Posterior cingulate gyrus (tissue), 11 donors: ENCODE measurements at regions of chr22 and their contacts with region 1.

Region 1: GRCh38 chr22:37199103-37199759 is 11.2 kb upstream of the C1QTNF6 start:
- DNase-seq: peak; percentile 94 to 100 (median 97)

Region 2: GRCh38 chr22:36546092-36546804 is 653.0 kb before region 1 on chr22:
- intact Hi-C with region 1: loop called (anchors 10 kb)
- DNase-seq: peak in 9 of 10 donors; percentile 38 to 91 (median 55)

Region 3: DNA sequence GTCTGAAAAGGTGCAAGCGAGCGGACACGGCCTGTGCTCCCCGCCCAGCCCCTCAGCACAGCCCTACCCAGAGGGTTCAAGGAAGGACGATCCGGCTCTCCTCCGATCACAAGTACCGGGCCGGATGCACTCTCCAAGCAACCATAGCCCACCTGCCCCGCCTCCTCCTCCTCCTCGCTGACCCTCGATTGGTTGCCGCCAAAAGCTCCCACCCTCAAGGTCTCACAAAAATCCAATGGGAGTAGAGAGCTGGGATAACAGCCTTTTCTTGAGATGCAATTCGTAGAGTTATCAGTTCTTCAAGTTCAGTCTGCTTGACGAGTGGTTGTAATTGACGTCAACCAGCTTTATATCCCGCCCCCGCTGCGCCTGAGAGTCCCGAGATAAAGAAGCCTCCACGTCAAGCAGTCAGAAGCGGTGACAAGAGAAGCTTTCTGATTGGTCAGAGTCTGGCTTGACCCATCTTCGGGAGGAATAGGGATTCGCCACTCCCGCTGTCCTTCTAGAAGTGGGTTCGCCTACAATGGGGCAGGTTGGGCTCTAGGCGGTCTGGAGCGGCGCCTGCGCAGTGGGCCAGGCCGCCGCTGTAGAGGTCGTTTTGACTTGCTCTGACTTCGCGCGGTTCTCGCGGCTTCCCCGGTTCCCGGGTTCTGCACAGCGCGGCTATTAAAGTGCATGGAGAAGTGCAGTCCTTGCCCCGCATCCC is 423.1 kb before region 1 on chr22 and contains the start of gene IFT27:
- intact Hi-C with region 1: loop called (anchors 2 kb)
- DNase-seq: peak; percentile 96 to 100 (median 99)

Region 4: GRCh38 chr22:37077884-37078485 is 121.2 kb before region 1 on chr22:
- intact Hi-C with region 1: loop called (anchors 2 kb)
- DNase-seq: peak in 5 of 10 donors; percentile 55 to 91 (median 62)

Region 5: GRCh38 chr22:37166675-37167066 is 32.6 kb before region 1 on chr22:
- intact Hi-C with region 1: loop called (anchors 1 kb)
- DNase-seq: peak; percentile 66 to 98 (median 86)

Region 6: GRCh38 chr22:37229805-37230672 is 30.8 kb after region 1 on chr22:
- intact Hi-C with region 1: no loop called
- DNase-seq: peak in 1 of 10 donors; percentile 2

Region 7: GRCh38 chr22:37260901-37261336 is 61.7 kb after region 1 on chr22:
- intact Hi-C with region 1: no loop called
- DNase-seq: peak in 7 of 10 donors; percentile 17 to 83 (median 38)